Caki2 (cell line): ENCODE measurements at regions of chr10 and their contacts with region 1.

Region 1: DNA sequence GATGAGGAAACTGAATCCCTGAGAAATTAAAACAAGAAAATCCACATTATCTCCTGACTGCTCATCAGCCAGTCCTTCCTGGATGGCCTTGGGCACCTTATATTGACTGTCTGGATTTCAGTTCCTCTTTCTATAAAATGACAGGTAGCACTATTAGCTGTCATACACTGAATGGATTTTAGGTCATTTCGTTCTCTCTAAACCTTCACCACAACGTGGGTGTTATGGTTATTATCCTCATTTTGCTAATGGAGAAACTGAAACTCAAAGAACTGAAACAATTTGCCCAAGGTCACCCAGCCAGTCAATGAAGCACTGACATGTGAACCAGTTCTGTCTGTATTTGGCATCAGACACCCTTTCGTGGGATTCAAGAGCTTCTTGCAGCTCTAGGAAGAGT is 193.8 kb downstream of the CYP26A1 start:
- DNase-seq: no peak

Region 2: GRCh38 chr10:93199191-93199751 is 68.2 kb before region 1 on chr10:
- in situ Hi-C with region 1: loop called (anchors 10 kb)
- DNase-seq: peak; percentile 97

Region 3: DNA sequence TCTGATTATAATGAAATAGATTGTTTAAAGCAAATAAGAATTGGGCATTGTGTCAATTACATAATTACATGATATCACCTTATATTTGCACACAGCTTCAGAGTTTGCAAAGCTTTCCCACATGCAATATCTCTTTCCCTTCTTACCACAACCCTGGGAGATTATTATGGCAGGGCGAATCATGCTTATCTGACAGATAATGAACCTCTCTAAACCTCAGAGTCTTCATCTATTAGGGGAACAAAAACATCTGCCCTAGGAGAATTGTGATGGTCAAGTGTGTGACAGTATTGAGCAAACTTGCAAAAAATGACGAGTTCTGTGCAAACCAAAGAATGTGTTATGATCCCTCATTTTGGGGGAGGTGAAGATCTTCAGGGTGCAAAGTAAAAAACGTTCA is 124.6 kb after region 1 on chr10:
- in situ Hi-C with region 1: no loop called
- DNase-seq: no peak